ENCODE measurements at regions of chr5 and their contacts with region 1.

Region 1: DNA sequence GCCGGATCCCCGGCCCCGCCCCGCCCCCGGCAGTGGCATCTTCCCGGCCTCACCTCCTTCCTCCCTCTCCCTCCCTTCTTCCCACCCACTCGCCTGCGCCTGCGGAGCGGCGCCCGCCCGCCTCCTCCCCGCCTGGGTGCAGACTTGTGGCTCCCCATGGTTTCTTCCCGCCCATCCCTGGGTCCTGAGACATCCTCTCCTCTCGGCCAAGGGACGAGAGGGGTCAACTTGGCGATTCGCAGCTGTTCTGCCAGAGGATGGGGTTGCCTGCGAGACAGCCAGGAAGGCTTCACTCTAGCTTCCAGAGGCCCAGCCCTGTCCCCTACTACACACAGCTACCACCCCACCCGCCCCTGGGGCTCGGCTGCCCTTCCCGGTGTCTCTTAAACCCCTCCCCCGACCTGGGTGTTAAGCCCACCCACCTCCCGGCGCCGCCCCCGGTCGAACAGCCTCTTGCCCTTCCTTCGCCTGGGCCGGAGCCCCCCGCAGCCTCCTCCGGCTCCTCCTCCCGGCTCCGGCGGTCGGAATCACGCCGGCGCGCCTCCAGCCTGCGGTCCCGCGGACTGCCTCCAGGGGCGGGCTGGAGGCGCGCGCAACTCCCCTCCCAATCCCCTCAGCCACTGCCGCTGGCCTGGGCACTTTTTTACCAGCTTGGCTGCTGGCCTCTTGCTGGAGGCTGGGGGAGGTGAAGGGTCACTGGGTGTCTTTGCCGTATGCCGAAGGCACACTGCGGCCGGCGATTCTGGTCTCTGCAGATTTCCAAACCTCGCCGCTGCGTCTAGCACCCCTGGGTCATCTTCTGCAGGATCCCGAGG is 1.9 kb downstream of the JADE2 start:
- DNase-seq: peak; percentile 89 to 94
- H3K4me3 ChIP-seq: peak overlapping the region; percentile 92
- H3K4me3 Mint-ChIP-seq: peak overlapping the region; percentile 96
- H3K27ac Mint-ChIP-seq: peak overlapping the region; percentile 92
- H3K4me1 ChIP-seq: peaks cover 31% of the 10 kb centered on the region
- H3K4me1 Mint-ChIP-seq: peaks cover 8% of the 10 kb centered on the region
- H3K27me3 ChIP-seq: no peaks in the 10 kb centered on the region
- H3K27me3 Mint-ChIP-seq: no peaks in the 10 kb centered on the region
- CTCF ChIP-seq: peak; percentile 76 to 79

Region 2: GRCh38 chr5:134411546-134412266 is 115.6 kb before region 1 on chr5 and contains the start of gene CDKN2AIPNL:
- CTCF ChIA-PET with region 1: interaction called, 6 read pairs
- POLR2A ChIA-PET with region 1: interaction called, 11 read pairs
- intact Hi-C with region 1: loop called (anchors 1 kb)
- DNase-seq: peak; percentile 91 to 95
- H3K4me3 ChIP-seq: peak within 1 kb of the TSS; percentile 83
- H3K4me3 Mint-ChIP-seq: peak within 1 kb of the TSS; percentile 98
- H3K27ac Mint-ChIP-seq: peak within 1 kb of the TSS; percentile 35
- H3K4me1 ChIP-seq: peaks cover 47% of the 10 kb centered on the region
- H3K4me1 Mint-ChIP-seq: peaks cover 11% of the 10 kb centered on the region
- H3K27me3 ChIP-seq: no peaks in the 10 kb centered on the region
- H3K27me3 Mint-ChIP-seq: no peaks in the 10 kb centered on the region
- CTCF ChIP-seq: peak; percentile 74 to 89
- total RNA-seq, gene CDKN2AIPNL: 49.8 and 53.2 TPM in 2 replicates

Region 3: DNA sequence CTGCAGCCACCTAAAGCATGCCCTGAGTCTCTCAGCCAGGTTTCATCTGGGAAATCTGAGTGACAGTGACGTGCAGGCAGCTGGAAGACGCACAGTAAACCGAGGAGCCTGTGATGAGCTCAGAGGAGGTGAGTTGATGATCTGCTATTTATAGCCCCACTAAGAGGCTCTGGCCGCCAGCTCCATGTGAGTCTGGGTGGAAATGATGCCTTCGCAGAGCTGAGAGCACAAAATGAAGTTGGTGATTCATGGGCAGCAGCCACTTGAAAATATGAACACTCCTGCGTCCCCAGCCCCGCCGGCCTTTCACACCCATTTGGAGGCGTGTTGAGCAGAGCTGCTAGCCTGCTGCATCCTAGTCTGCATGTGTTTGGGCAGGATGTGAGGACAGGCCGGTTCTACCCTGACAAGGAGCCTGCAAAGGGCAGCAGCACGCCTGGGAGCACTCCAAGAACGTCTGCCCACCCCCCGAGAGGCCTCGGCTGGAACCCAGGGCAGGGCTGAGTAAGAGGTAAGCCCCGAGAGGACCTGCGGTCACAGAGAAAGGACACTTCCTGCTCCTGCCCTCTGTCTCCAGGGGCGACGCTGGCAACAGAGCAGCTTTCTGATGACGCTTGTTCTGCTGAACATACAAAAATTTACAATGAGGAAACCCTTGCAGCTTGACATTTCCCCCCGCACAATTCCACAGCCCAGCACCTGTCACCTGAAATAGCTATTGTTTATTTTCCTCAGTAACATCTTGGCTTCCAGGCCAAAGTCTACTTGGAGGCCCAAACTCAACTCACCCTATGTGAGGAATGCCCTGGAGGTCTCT is 90.6 kb before region 1 on chr5:
- CTCF ChIA-PET with region 1: interaction called, 5 read pairs
- POLR2A ChIA-PET with region 1: interaction called, 13 read pairs
- intact Hi-C with region 1: loop called (anchors 1 kb)
- DNase-seq: peak; percentile 84 to 86
- H3K4me3 ChIP-seq: peak overlapping the region; percentile 19
- H3K4me3 Mint-ChIP-seq: peak overlapping the region; percentile 55
- H3K27ac Mint-ChIP-seq: peak overlapping the region; percentile 82
- H3K4me1 ChIP-seq: peaks cover 47% of the 10 kb centered on the region
- H3K4me1 Mint-ChIP-seq: peaks cover 54% of the 10 kb centered on the region
- H3K27me3 ChIP-seq: no peaks in the 10 kb centered on the region
- H3K27me3 Mint-ChIP-seq: no peaks in the 10 kb centered on the region
- CTCF ChIP-seq: no peak